ENCODE measurements at regions of chr3 and their contacts with region 1.

Region 1: GRCh38 chr3:71130471-71131374 is 452.8 kb downstream of the FOXP1 start:
- DNase-seq: peak; percentile 67
- H3K4me3 Mint-ChIP-seq: peak overlapping the region; percentile 89
- H3K27ac Mint-ChIP-seq: peak overlapping the region; percentile 93
- H3K4me1 Mint-ChIP-seq: peaks cover 65% of the 10 kb centered on the region
- H3K27me3 Mint-ChIP-seq: no peaks in the 10 kb centered on the region

Region 2: GRCh38 chr3:71064288-71064955 is 66.3 kb before region 1 on chr3:
- intact Hi-C with region 1: loop called (anchors 1 kb)
- DNase-seq: peak; percentile 59
- H3K4me3 Mint-ChIP-seq: no peak overlapping the region
- H3K27ac Mint-ChIP-seq: no peak overlapping the region
- H3K4me1 Mint-ChIP-seq: peaks cover 39% of the 10 kb centered on the region
- H3K27me3 Mint-ChIP-seq: no peaks in the 10 kb centered on the region

Region 3: GRCh38 chr3:71149959-71150954 is 19.5 kb after region 1 on chr3:
- intact Hi-C with region 1: loop called (anchors 1 kb)
- DNase-seq: no peak
- H3K4me3 Mint-ChIP-seq: no peak overlapping the region
- H3K27ac Mint-ChIP-seq: peak overlapping the region; percentile 57
- H3K4me1 Mint-ChIP-seq: peaks cover 13% of the 10 kb centered on the region
- H3K27me3 Mint-ChIP-seq: peaks cover 28% of the 10 kb centered on the region

Region 4: GRCh38 chr3:71360764-71361163 is 230.0 kb after region 1 on chr3:
- intact Hi-C with region 1: loop called (anchors 1 kb)
- DNase-seq: no peak
- H3K4me3 Mint-ChIP-seq: no peak overlapping the region
- H3K27ac Mint-ChIP-seq: peak overlapping the region; percentile 80
- H3K4me1 Mint-ChIP-seq: peaks cover 19% of the 10 kb centered on the region
- H3K27me3 Mint-ChIP-seq: peaks cover 25% of the 10 kb centered on the region

Region 5: GRCh38 chr3:71423151-71423906 is 292.6 kb after region 1 on chr3:
- intact Hi-C with region 1: loop called (anchors 1 kb)
- DNase-seq: no peak
- H3K4me3 Mint-ChIP-seq: no peak overlapping the region
- H3K27ac Mint-ChIP-seq: no peak overlapping the region
- H3K4me1 Mint-ChIP-seq: peaks cover 22% of the 10 kb centered on the region
- H3K27me3 Mint-ChIP-seq: peaks cover 61% of the 10 kb centered on the region

Measured in activated T-helper 1 cell treated with anti-CD3 and anti-CD28 coated beads, Interleukin-12 subunit alpha, Interleukin-12 subunit beta, Interleukin-2, Interleukin-4 antibody, amounts not matched to agents 30 ng/mL and 10 ng/mL and 1 ng/mL, durations not matched to agents 14 hours and 24 hours and 36 hours (primary cell).